Endothelial cell of umbilical vein (primary cell): ENCODE measurements at regions of chrX and their contacts with region 1.

Region 1: GRCh38 chrX:27679281-27679680 is 89.1 kb downstream of the DCAF8L2 start:
- DNase-seq: peak; percentile 72
- H3K4me3 ChIP-seq: no peak overlapping the region
- H3K27ac ChIP-seq: no peak overlapping the region
- H3K4me1 ChIP-seq: no peaks in the 10 kb centered on the region
- H3K27me3 ChIP-seq: no peaks in the 10 kb centered on the region
- CTCF ChIP-seq: no peak
- POLR2A ChIP-seq: no peak

Region 2: GRCh38 chrX:27555514-27555913 is 123.8 kb before region 1 on chrX:
- CTCF ChIA-PET with region 1: interaction called, 9 read pairs
- POLR2A ChIA-PET with region 1: no interaction called
- dilution Hi-C with region 1: no loop called
- intact Hi-C with region 1: loop called (anchors 1 kb)
- DNase-seq: peak; percentile 38
- H3K4me3 ChIP-seq: no peak overlapping the region
- H3K27ac ChIP-seq: no peak overlapping the region
- H3K4me1 ChIP-seq: no peaks in the 10 kb centered on the region
- H3K27me3 ChIP-seq: no peaks in the 10 kb centered on the region
- CTCF ChIP-seq: peak; percentile 30 to 35
- POLR2A ChIP-seq: no peak

Region 3: DNA sequence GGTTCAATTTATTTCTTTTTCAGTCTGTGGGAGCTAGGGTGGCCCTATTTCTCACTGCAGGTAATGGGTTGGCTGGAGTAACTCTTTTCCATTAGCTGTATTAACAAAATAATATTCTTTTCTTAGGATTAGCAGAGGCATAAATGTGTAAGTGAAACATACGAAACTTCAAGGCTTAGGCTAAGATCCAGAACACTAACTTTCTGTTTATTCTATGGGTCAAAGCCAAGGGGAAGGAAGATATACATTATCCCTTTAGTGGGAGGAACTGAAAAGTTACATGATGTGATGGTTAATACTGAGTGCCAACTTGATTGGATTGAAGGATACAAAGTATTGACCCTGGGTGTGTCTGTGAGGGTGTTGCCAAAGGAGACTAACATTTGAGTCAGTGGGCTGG is 22.7 kb before region 1 on chrX:
- CTCF ChIA-PET with region 1: no interaction called
- POLR2A ChIA-PET with region 1: no interaction called
- dilution Hi-C with region 1: no loop called
- intact Hi-C with region 1: no loop called
- DNase-seq: no peak
- H3K4me3 ChIP-seq: no peak overlapping the region
- H3K27ac ChIP-seq: no peak overlapping the region
- H3K4me1 ChIP-seq: no peaks in the 10 kb centered on the region
- H3K27me3 ChIP-seq: no peaks in the 10 kb centered on the region
- CTCF ChIP-seq: no peak
- POLR2A ChIP-seq: no peak

Region 4: GRCh38 chrX:27694667-27695066 is 15.4 kb after region 1 on chrX:
- CTCF ChIA-PET with region 1: no interaction called
- POLR2A ChIA-PET with region 1: no interaction called
- dilution Hi-C with region 1: no loop called
- intact Hi-C with region 1: no loop called
- DNase-seq: no peak
- H3K4me3 ChIP-seq: no peak overlapping the region
- H3K27ac ChIP-seq: no peak overlapping the region
- H3K4me1 ChIP-seq: no peaks in the 10 kb centered on the region
- H3K27me3 ChIP-seq: no peaks in the 10 kb centered on the region
- CTCF ChIP-seq: no peak
- POLR2A ChIP-seq: no peak

Region 5: DNA sequence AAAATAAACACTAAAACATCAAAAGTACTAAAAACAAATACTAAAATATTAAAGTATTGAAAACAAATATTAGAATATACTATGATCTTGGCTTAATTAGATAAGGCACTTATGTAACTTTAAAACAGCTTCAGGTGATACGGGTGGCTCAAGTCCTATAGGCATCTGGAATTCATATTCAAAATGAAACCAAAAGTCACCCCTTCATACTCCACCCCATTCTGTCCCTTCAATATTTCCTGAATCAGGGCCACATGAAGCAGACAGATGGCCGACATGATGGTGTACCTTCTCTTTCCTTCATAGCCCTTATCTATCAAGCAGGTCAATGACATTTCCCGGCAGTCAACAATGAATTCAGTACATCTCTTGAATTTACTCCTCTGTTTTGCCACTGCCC is 56.6 kb after region 1 on chrX:
- CTCF ChIA-PET with region 1: no interaction called
- POLR2A ChIA-PET with region 1: no interaction called
- dilution Hi-C with region 1: no loop called
- intact Hi-C with region 1: no loop called
- DNase-seq: no peak
- H3K4me3 ChIP-seq: no peak overlapping the region
- H3K27ac ChIP-seq: no peak overlapping the region
- H3K4me1 ChIP-seq: no peaks in the 10 kb centered on the region
- H3K27me3 ChIP-seq: no peaks in the 10 kb centered on the region
- CTCF ChIP-seq: no peak
- POLR2A ChIP-seq: no peak

Region 6: DNA sequence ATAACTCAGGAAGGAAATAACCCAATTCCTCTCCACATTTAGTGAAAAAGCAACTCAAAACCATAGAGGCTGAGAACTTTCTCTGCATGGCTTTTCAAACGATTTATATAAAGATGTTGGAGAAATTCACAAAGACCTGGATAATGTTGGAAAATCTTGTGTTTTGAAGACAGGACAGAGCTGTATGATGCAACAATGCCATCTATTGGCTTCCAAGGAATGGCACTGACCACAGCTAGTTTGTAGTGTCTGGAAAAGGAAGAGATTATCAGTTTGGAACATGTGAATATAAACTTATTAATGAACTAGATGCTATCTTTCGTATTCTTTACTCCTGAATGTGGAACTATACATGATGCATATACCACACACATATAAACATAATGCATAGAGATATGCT is 1411.5 kb after region 1 on chrX:
- CTCF ChIA-PET with region 1: no interaction called
- POLR2A ChIA-PET with region 1: no interaction called
- dilution Hi-C with region 1: no loop called
- intact Hi-C with region 1: loop called (anchors 10 kb)
- DNase-seq: peak; percentile 26
- H3K4me3 ChIP-seq: no peak overlapping the region
- H3K27ac ChIP-seq: no peak overlapping the region
- H3K4me1 ChIP-seq: no peaks in the 10 kb centered on the region
- H3K27me3 ChIP-seq: no peaks in the 10 kb centered on the region
- CTCF ChIP-seq: peak in 1 of 2 donors; percentile 23
- POLR2A ChIP-seq: no peak